T-cell (primary cell): ENCODE measurements at regions of chr9 and their contacts with region 1.

Region 1: DNA sequence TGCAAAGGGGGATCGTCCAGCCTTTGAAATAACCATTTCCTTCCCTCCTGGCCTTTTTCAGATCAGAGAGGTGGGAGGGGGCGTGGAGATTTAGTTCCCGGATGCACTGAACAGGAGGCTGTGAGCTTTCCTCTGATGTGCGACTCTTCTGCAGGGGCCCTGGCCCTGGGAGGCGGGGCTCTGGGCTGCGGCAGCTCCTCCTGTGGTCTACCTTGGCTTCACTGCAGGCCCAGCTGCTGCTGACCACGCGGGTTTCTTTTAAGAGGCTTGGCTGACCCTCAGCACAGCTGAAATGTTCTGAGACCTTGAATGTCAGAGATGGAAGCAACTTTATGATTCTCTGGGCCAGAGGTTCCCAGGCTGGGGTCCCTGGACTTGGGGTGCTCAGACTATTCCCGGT is 27.0 kb upstream of the COL15A1 start:
- DNase-seq: no peak
- ATAC-seq: no peak
- H3K4me3 ChIP-seq: no peak overlapping the region
- H3K4me3 Mint-ChIP-seq: no peak overlapping the region
- H3K27ac ChIP-seq: no peak overlapping the region
- H3K27ac Mint-ChIP-seq: no peak overlapping the region
- H3K4me1 ChIP-seq: no peaks in the 10 kb centered on the region
- H3K4me1 Mint-ChIP-seq: no peaks in the 10 kb centered on the region
- H3K27me3 ChIP-seq: no peaks in the 10 kb centered on the region
- H3K27me3 Mint-ChIP-seq: peaks cover 0 to 3% of the 10 kb centered on the region in 2 donors

Region 2: GRCh38 chr9:98899408-98900056 is 17.1 kb before region 1 on chr9:
- CTCF ChIA-PET with region 1: no interaction called
- POLR2A ChIA-PET with region 1: interaction called in 1 of 2 experiments, 13 read pairs
- DNase-seq: peak in 2 of 35 experiments; percentile 6 to 12
- ATAC-seq: peak in 1 of 4 experiments; percentile 35
- H3K4me3 ChIP-seq: no peak overlapping the region
- H3K4me3 Mint-ChIP-seq: no peak overlapping the region
- H3K27ac ChIP-seq: no peak overlapping the region
- H3K27ac Mint-ChIP-seq: no peak overlapping the region
- H3K4me1 ChIP-seq: no peaks in the 10 kb centered on the region
- H3K4me1 Mint-ChIP-seq: peaks cover 3 to 8% (median 5%) of the 10 kb centered on the region in 3 donors
- H3K27me3 ChIP-seq: peaks cover 0 to 10% of the 10 kb centered on the region in 2 experiments
- H3K27me3 Mint-ChIP-seq: peaks cover 15 to 21% of the 10 kb centered on the region in 2 donors